ENCODE measurements at regions of chr6 and their contacts with region 1.

Region 1: DNA sequence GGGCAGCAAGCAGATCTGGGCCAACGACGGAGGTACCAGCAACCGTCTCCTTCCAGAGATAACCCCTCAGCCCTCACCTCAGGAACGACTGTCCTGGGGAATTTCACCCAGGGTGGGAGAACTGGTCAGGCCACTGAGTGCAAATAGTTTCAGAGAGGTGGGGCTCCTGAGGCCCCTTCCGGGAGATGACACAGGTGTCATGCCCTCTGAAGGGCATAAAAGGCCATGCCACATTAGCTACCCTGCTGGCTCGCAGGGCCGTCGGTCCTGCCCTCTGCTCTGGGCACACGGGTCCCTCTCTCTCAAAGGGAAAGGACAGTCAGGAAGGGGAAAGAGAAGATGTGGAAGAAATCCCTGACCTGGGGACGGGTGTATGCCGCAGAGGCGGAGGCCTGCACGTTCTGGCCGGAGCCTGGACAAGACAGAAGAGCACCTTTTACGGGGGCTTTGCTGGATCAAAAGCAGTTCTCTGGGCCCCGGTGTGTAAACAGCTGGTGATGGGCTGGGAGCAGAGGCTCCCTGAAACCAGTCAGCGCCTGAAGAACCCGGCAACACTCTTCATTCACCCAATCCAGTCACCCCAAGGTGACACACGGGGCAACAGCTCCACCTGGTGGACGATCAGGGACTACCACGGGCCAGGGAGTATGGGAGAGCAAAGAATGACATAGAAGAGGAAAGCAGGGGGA is 6.4 kb upstream of the TAF8 start:
- DNase-seq: peak; percentile 75 to 98 (median 93)

Region 2: GRCh38 chr6:41367700-41368099 is 676.2 kb before region 1 on chr6:
- intact Hi-C with region 1: loop called (anchors 5 kb)
- DNase-seq: peak; percentile 56 to 96 (median 78)

Region 3: DNA sequence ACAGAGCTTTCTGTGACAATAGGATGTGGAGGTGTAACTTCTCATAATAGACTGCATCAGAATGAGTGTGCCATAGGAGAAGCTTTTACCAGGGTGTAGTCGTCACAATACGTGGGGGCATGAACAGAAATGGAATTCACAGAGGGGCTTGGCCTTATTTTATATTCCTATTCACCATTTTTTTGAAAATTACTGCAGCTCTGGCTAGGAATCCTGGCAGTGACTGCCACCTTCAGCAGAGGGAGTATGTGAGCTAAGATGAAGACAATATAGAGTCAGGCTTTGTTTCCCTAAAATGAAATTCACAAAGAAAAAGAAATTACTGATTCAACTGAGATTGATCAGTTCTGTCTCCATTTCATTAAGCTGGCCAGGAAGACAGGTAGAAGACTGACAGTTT is 242.6 kb before region 1 on chr6:
- intact Hi-C with region 1: loop called (anchors 5 kb)
- DNase-seq: no peak

Region 4: GRCh38 chr6:41846666-41847237 is 197.2 kb before region 1 on chr6:
- intact Hi-C with region 1: loop called (anchors 5 kb)
- DNase-seq: peak in 4 of 10 donors; percentile 7 to 36 (median 17)

Region 5: DNA sequence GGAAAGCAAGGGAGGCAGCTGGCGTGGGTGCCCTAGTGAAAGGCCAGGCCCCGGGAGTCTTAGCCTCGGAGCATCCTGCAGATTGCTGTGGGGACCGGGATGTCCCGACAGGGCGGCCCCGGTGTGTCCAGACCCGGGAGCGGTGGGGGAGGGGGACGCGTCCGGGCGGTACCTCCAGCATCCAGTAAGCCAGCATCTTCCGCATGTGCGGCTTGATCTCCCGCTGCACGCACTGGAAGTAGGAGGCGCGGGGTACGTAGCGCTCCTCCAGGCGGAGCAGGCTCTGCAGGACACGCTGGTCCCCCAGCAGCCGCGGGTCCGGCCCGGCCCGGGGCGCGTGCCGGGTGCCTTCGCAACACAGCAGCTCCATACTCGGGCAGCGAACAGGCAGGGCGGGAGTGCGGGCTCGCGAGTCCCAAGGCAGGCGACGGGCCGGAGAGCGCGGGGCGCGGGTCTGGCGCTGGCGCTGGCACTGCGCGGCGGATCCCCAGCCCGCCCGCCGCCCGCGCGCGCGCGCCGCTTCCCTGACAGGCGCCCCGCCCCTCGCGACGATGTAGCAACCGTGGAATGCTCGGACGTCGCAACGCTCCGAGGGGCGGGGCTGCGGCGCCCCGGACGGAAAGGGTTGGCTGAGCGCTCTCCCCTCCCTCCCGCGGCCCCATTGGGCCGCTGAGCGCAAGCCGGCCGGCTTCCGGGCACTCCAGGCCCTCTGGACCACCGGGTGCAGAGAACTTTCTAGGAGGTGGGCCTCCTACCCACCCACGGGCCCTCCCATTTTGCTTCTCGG is 102.5 kb before region 1 on chr6 and contains the start of gene CCND3:
- intact Hi-C with region 1: loop called (anchors 2 kb)
- DNase-seq: peak; percentile 81 to 98 (median 92)